Caco-2 (cell line): ENCODE measurements at regions of chr3 and their contacts with region 1.

Region 1: DNA sequence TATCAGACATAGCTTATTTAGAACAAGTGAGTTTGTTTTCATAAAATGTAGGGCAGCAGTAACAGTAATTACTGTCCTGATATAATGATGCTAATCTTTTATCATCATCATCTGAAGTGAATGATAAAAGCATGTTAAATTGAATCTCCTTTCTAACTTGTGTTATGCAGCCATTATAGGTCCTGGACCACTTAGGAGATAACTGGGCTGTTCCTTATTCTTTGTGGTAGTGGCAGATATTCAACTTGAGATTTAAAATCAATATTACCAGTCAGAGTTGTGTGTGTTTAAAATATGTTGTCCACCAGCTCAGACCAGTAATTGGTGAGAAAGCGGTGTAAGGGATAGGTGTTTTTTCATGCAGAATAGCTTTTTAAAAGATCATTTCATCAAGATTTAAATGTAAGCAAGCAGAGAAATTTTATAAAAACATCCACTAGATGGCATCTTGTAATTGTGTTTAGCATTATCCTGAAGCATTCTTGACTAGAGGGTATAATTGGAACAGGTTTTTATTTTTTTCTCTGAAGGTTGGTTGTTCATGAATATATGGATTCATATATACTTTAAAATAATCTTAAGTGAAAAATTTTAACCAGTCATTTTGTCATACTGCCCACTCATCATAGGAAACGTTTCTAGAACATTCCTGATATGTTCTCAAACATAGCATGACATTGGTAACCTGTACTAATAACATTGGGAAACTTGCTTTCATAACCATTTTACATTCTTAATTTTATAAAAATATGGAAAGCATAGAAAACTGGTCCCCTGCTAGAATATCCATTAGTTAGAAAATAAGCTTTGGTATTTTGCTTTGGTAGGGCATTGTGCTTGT is 153.9 kb downstream of the BBX start:
- DNase-seq: no peak
- H3K4me3 ChIP-seq: no peak overlapping the region
- H3K4me3 Mint-ChIP-seq: no peak overlapping the region
- H3K27ac Mint-ChIP-seq: no peak overlapping the region
- H3K4me1 ChIP-seq: no peaks in the 10 kb centered on the region
- H3K4me1 Mint-ChIP-seq: no peaks in the 10 kb centered on the region
- H3K27me3 ChIP-seq: no peaks in the 10 kb centered on the region
- H3K27me3 Mint-ChIP-seq: peaks cover 4% of the 10 kb centered on the region
- CTCF ChIP-seq: peak; percentile 46 to 62

Region 2: GRCh38 chr3:107740992-107741896 is 64.6 kb after region 1 on chr3:
- CTCF ChIA-PET with region 1: interaction called, 7 read pairs
- POLR2A ChIA-PET with region 1: no interaction called
- intact Hi-C with region 1: loop called (anchors 1 kb)
- DNase-seq: no peak
- H3K4me3 ChIP-seq: no peak overlapping the region
- H3K4me3 Mint-ChIP-seq: no peak overlapping the region
- H3K27ac Mint-ChIP-seq: no peak overlapping the region
- H3K4me1 ChIP-seq: no peaks in the 10 kb centered on the region
- H3K4me1 Mint-ChIP-seq: no peaks in the 10 kb centered on the region
- H3K27me3 ChIP-seq: no peaks in the 10 kb centered on the region
- H3K27me3 Mint-ChIP-seq: peaks cover 14% of the 10 kb centered on the region
- CTCF ChIP-seq: peak; percentile 41 to 43

Region 3: DNA sequence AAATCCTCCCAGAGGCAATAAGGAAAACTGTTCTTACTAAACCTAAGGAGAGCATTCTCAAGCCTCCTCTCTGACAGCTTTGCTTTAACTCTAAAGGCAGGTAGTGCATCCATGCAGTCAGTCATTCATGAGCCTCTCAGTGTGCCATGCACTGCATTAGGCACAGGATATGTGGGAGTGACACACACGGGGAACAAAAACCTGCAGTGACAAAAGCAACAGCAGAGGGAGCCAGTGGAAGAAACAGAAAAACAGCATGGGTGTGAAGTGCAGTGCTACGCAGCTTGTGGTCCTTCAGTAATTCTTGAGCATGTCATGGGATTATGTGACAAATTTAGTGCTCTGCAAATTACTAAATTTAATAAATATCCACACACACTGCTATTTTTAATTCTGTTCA is 76.8 kb after region 1 on chr3:
- CTCF ChIA-PET with region 1: no interaction called
- POLR2A ChIA-PET with region 1: no interaction called
- intact Hi-C with region 1: no loop called
- DNase-seq: peak; percentile 31 to 45
- H3K4me3 ChIP-seq: no peak overlapping the region
- H3K4me3 Mint-ChIP-seq: no peak overlapping the region
- H3K27ac Mint-ChIP-seq: no peak overlapping the region
- H3K4me1 ChIP-seq: no peaks in the 10 kb centered on the region
- H3K4me1 Mint-ChIP-seq: no peaks in the 10 kb centered on the region
- H3K27me3 ChIP-seq: no peaks in the 10 kb centered on the region
- H3K27me3 Mint-ChIP-seq: no peaks in the 10 kb centered on the region
- CTCF ChIP-seq: peak in 1 of 2 experiments; percentile 27

Region 4: GRCh38 chr3:107927361-107928083 is 250.8 kb after region 1 on chr3:
- CTCF ChIA-PET with region 1: interaction called, 10 read pairs
- POLR2A ChIA-PET with region 1: no interaction called
- intact Hi-C with region 1: loop called (anchors 10 kb)
- DNase-seq: peak; percentile 37 to 64
- H3K4me3 ChIP-seq: peak overlapping the region; percentile 36
- H3K4me3 Mint-ChIP-seq: peak overlapping the region; percentile 74
- H3K27ac Mint-ChIP-seq: no peak overlapping the region
- H3K4me1 ChIP-seq: no peaks in the 10 kb centered on the region
- H3K4me1 Mint-ChIP-seq: peaks cover 5% of the 10 kb centered on the region
- H3K27me3 ChIP-seq: peaks cover 3% of the 10 kb centered on the region; the same call in 1 of the 2 replicates
- H3K27me3 Mint-ChIP-seq: peaks cover 10% of the 10 kb centered on the region
- CTCF ChIP-seq: peak; percentile 78 to 92

Region 5: GRCh38 chr3:108477511-108478147 is 800.9 kb after region 1 on chr3:
- CTCF ChIA-PET with region 1: interaction called, 3 read pairs
- POLR2A ChIA-PET with region 1: no interaction called
- intact Hi-C with region 1: loop called (anchors 10 kb)
- DNase-seq: peak; percentile 53 to 57
- H3K4me3 ChIP-seq: no peak overlapping the region
- H3K4me3 Mint-ChIP-seq: no peak overlapping the region
- H3K27ac Mint-ChIP-seq: no peak overlapping the region
- H3K4me1 ChIP-seq: no peaks in the 10 kb centered on the region
- H3K4me1 Mint-ChIP-seq: no peaks in the 10 kb centered on the region
- H3K27me3 ChIP-seq: no peaks in the 10 kb centered on the region
- H3K27me3 Mint-ChIP-seq: peaks cover 2% of the 10 kb centered on the region
- CTCF ChIP-seq: peak; percentile 59 to 70